Keratinocyte (primary cell): ENCODE measurements at regions of chrX and their contacts with region 1.

Region 1: GRCh38 chrX:24169211-24169610 is 19.7 kb downstream of the ZFX start:
- DNase-seq: no peak
- H3K4me3 ChIP-seq: no peak overlapping the region
- H3K27ac ChIP-seq: peak overlapping the region; percentile 26
- H3K4me1 ChIP-seq: peaks cover 17% of the 10 kb centered on the region
- H3K27me3 ChIP-seq: no peaks in the 10 kb centered on the region
- CTCF ChIP-seq: no peak

Region 2: GRCh38 chrX:24090300-24091200 is 78.7 kb before region 1 on chrX:
- dilution Hi-C with region 1: no loop called
- DNase-seq: no peak
- H3K4me3 ChIP-seq: no peak overlapping the region
- H3K27ac ChIP-seq: no peak overlapping the region
- H3K4me1 ChIP-seq: no peaks in the 10 kb centered on the region
- H3K27me3 ChIP-seq: no peaks in the 10 kb centered on the region
- CTCF ChIP-seq: no peak

Region 3: GRCh38 chrX:24204331-24204730 is 35.1 kb after region 1 on chrX:
- dilution Hi-C with region 1: loop called (anchors 5 kb)
- DNase-seq: no peak
- H3K4me3 ChIP-seq: no peak overlapping the region
- H3K27ac ChIP-seq: no peak overlapping the region
- H3K4me1 ChIP-seq: peaks cover 13% of the 10 kb centered on the region
- H3K27me3 ChIP-seq: no peaks in the 10 kb centered on the region
- CTCF ChIP-seq: no peak

Region 4: DNA sequence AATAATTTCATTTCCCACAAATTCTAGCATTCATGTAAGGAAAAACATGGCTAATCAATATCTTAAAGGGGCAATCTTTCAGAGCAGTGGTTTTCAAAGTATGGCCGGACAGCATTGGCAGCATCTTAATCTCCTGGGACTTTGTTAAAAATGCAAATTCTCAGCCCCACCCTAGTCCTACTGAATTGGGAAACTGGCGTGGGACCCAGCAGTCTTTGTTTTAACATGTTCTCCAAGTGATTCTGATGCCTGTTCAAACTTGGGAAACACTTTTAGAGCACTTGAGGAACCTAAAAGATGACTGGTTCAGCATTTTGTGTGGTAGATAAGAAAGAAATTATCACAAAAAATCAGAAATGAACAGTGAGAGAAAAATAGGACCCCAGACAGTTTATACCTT is 46.1 kb after region 1 on chrX:
- dilution Hi-C with region 1: no loop called
- DNase-seq: no peak
- H3K4me3 ChIP-seq: no peak overlapping the region
- H3K27ac ChIP-seq: peak overlapping the region; percentile 15
- H3K4me1 ChIP-seq: peaks cover 12% of the 10 kb centered on the region
- H3K27me3 ChIP-seq: no peaks in the 10 kb centered on the region
- CTCF ChIP-seq: no peak